ENCODE measurements at regions of chr12 and their contacts with region 1.

Region 1: GRCh38 chr12:63836936-63837335 is 7.6 kb upstream of the SRGAP1 start:
- DNase-seq: no peak
- H3K4me3 ChIP-seq: no peak overlapping the region
- H3K27ac ChIP-seq: no peak overlapping the region
- H3K4me1 ChIP-seq: no peaks in the 10 kb centered on the region
- H3K27me3 ChIP-seq: no peaks in the 10 kb centered on the region
- CTCF ChIP-seq: no peak
- EP300 ChIP-seq: no peak
- POLR2A ChIP-seq: no peak

Region 2: GRCh38 chr12:64236549-64236948 is 399.6 kb after region 1 on chr12:
- in situ Hi-C with region 1: loop called in 2 of 4 experiments (anchors 10 kb)
- intact Hi-C with region 1: no loop called
- DNase-seq: no peak
- H3K4me3 ChIP-seq: no peak overlapping the region
- H3K27ac ChIP-seq: no peak overlapping the region
- H3K4me1 ChIP-seq: peaks cover 0 to 2% (median 0%) of the 10 kb centered on the region in 4 donors
- H3K27me3 ChIP-seq: no peaks in the 10 kb centered on the region
- CTCF ChIP-seq: no peak
- EP300 ChIP-seq: no peak
- POLR2A ChIP-seq: no peak

Region 3: DNA sequence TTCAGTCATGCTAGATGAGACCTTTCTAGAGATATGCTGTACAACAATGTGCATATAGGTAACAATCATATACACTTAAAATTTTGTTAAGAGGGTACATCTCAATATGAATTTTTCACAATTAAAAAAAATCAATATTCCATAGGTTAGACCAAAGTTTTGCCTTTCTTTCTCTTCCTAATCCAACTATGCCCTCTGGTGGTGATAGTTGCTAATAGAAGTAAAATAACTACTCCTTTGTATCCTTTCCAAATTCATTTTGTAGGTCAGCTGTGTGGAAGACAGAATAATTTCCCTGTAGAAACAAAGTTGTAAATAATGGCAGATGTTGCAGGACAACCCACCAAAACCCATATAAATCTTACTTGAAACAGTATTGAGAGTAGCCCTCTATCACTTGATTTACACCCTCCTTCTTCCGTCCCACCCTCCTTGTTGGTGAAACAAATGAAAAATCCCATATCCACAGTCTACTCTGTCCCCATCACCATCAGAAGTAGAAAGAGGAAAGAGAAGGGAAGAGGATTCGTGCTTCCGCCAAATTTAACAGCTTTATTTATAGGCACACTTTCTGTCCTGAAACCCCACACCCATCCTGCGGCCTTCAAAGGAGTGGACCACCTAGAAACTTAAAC is 419.3 kb after region 1 on chr12:
- in situ Hi-C with region 1: loop called in 2 of 4 experiments (anchors 5 kb)
- intact Hi-C with region 1: loop called (anchors 5 kb)
- DNase-seq: no peak
- H3K4me3 ChIP-seq: no peak overlapping the region
- H3K27ac ChIP-seq: no peak overlapping the region
- H3K4me1 ChIP-seq: no peaks in the 10 kb centered on the region
- H3K27me3 ChIP-seq: no peaks in the 10 kb centered on the region
- CTCF ChIP-seq: peak; percentile 64 to 75 (median 69)
- EP300 ChIP-seq: no peak
- POLR2A ChIP-seq: no peak

Region 4: GRCh38 chr12:64261813-64262212 is 424.9 kb after region 1 on chr12:
- in situ Hi-C with region 1: loop called in 1 of 4 experiments (anchors 5 kb)
- intact Hi-C with region 1: loop called (anchors 5 kb)
- DNase-seq: no peak
- H3K4me3 ChIP-seq: no peak overlapping the region
- H3K27ac ChIP-seq: no peak overlapping the region
- H3K4me1 ChIP-seq: no peaks in the 10 kb centered on the region
- H3K27me3 ChIP-seq: no peaks in the 10 kb centered on the region
- CTCF ChIP-seq: no peak
- EP300 ChIP-seq: no peak
- POLR2A ChIP-seq: no peak

Measured in transverse colon (tissue), 4 donors.